ENCODE measurements at regions of chr19 and their contacts with region 1.

Region 1: DNA sequence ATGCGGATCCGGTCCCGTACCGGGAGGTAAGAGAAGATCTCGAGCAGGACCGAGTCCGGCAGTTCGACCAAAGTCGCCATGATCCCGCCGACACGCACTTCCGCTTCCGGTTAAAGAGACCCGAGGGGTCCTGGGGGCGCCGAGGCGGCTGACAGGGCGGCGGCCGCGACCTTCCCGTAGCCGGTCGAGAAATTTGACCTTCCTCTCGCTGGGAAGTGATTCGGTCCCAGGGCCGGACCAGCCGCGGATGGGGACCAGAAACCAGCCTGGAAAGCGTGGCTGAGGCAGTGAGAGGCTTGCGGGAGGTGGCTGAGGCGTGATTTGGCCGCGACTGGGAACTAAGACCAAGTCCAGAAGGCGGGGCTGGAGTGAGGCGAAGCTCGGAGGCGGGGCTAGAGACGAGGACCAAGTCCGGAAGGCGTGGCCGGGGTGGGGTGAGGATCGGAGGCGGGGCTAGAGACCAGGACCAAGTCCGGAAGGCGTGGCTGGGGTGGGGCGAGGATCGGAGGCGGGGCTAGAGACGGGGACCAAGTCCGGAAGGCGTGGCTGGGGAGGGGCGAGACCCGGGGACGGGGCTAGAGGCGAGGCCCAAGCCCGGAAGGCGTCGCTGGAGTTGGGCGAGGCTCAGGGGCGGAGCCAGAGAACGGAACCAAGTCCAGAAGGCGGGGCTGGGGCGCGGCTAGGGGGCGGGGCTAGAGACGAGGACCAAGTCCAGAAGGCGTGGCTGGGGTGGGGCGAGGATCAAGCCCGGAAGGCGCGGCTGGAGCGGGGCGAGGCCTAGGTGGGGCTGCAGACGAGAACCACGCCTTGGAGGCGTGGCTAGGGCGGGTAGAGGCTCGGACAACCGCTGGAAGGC is at the start of gene FBXL12:
- DNase-seq: peak; percentile 100
- ATAC-seq: peak; percentile 85
- H3K4me3 ChIP-seq: peak within 1 kb of the TSS; percentile 82
- H3K27ac ChIP-seq: peak within 1 kb of the TSS; percentile 62
- H3K4me1 ChIP-seq: peaks cover 13% of the 10 kb centered on the region
- H3K27me3 ChIP-seq: no peaks in the 10 kb centered on the region
- CTCF ChIP-seq: no peak
- total RNA-seq, gene FBXL12: 31.4 and 37.6 TPM in 2 replicates

Region 2: GRCh38 chr19:9865732-9866501 is 47.0 kb after region 1 on chr19:
- CTCF ChIA-PET with region 1: interaction called, 15 read pairs
- POLR2A ChIA-PET with region 1: no interaction called
- intact Hi-C with region 1: no loop called
- DNase-seq: no peak
- ATAC-seq: no peak
- H3K4me3 ChIP-seq: no peak overlapping the region
- H3K27ac ChIP-seq: no peak overlapping the region
- H3K4me1 ChIP-seq: no peaks in the 10 kb centered on the region
- H3K27me3 ChIP-seq: no peaks in the 10 kb centered on the region
- CTCF ChIP-seq: no peak

Region 3: DNA sequence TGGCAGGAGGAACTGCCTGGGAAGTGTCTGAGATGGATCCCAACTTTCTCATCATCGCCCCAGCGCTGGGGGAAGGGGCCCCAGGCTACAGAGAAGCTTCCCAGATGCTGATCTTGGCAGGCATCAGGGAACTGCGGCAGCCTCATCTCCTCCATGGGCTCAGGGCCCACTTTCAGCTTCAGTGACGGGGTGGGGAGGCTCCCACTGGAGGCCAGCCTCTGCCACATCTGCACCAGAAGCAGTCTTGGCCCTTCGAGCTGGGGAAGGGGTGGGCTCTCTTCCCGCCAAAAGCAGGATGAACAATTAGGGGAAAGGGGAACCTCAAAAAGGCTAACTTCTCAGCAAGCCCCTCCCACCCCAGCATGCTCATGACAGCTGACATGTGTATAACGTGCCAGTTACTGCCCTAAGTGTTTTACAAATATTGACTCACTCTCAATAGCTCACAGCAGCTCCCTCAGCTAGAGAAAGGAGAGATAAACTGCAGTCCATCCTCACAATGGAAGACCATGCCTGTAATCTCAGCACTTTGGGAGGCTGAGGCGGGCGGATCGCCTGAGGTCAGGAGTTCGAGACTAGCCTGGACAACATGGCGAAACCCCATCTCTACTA is 419.3 kb after region 1 on chr19:
- CTCF ChIA-PET with region 1: no interaction called
- POLR2A ChIA-PET with region 1: no interaction called
- intact Hi-C with region 1: no loop called
- DNase-seq: peak; percentile 77
- ATAC-seq: peak; percentile 98
- H3K4me3 ChIP-seq: no peak overlapping the region
- H3K27ac ChIP-seq: peak overlapping the region; percentile 14
- H3K4me1 ChIP-seq: peaks cover 22% of the 10 kb centered on the region
- H3K27me3 ChIP-seq: no peaks in the 10 kb centered on the region
- CTCF ChIP-seq: no peak

Measured in PC-3 (cell line).